ENCODE measurements at regions of chr15 and their contacts with region 1.

Region 1: GRCh38 chr15:96225320-96226259 is 104.9 kb upstream of the NR2F2 start:
- DNase-seq: peak; percentile 87 to 91
- H3K4me3 ChIP-seq: no peak overlapping the region
- H3K4me3 Mint-ChIP-seq: peak overlapping the region; percentile 12
- H3K27ac Mint-ChIP-seq: peak overlapping the region; percentile 74
- H3K4me1 ChIP-seq: peaks cover 50% of the 10 kb centered on the region
- H3K4me1 Mint-ChIP-seq: peaks cover 49% of the 10 kb centered on the region
- H3K27me3 ChIP-seq: no peaks in the 10 kb centered on the region
- H3K27me3 Mint-ChIP-seq: no peaks in the 10 kb centered on the region
- CTCF ChIP-seq: no peak

Region 2: DNA sequence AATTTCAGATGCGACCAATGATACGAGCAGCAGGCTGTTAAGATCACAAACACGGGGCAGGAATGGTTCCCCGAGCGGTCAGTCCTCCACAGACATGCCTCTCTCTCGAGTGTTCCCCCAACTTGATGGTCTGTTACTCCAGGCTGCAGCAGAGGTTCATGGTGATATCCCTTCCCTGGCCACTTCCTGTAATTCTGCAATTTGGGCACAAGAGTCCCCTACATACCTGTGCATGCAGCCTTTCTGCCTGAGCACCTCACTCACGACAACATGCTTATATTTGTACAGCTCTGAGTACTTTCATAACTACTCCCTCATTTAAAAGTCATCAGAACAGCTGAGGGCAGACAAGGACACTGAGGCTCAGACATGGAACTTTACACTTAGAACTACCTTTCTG is 303.2 kb before region 1 on chr15:
- CTCF ChIA-PET with region 1: no interaction called
- POLR2A ChIA-PET with region 1: no interaction called
- intact Hi-C with region 1: loop called (anchors 1 kb)
- DNase-seq: peak; percentile 52 to 57
- H3K4me3 ChIP-seq: no peak overlapping the region
- H3K4me3 Mint-ChIP-seq: no peak overlapping the region
- H3K27ac Mint-ChIP-seq: no peak overlapping the region
- H3K4me1 ChIP-seq: no peaks in the 10 kb centered on the region
- H3K4me1 Mint-ChIP-seq: peaks cover 7% of the 10 kb centered on the region
- H3K27me3 ChIP-seq: no peaks in the 10 kb centered on the region
- H3K27me3 Mint-ChIP-seq: no peaks in the 10 kb centered on the region
- CTCF ChIP-seq: peak in 1 of 2 experiments; percentile 33

Region 3: GRCh38 chr15:96031426-96032110 is 194.0 kb before region 1 on chr15:
- CTCF ChIA-PET with region 1: no interaction called
- POLR2A ChIA-PET with region 1: no interaction called
- intact Hi-C with region 1: no loop called
- DNase-seq: peak in 1 of 2 experiments; percentile 12
- H3K4me3 ChIP-seq: no peak overlapping the region
- H3K4me3 Mint-ChIP-seq: peak overlapping the region; percentile 13
- H3K27ac Mint-ChIP-seq: peak overlapping the region; percentile 43
- H3K4me1 ChIP-seq: peaks cover 24% of the 10 kb centered on the region
- H3K4me1 Mint-ChIP-seq: peaks cover 22% of the 10 kb centered on the region
- H3K27me3 ChIP-seq: no peaks in the 10 kb centered on the region
- H3K27me3 Mint-ChIP-seq: no peaks in the 10 kb centered on the region
- CTCF ChIP-seq: no peak

Region 4: DNA sequence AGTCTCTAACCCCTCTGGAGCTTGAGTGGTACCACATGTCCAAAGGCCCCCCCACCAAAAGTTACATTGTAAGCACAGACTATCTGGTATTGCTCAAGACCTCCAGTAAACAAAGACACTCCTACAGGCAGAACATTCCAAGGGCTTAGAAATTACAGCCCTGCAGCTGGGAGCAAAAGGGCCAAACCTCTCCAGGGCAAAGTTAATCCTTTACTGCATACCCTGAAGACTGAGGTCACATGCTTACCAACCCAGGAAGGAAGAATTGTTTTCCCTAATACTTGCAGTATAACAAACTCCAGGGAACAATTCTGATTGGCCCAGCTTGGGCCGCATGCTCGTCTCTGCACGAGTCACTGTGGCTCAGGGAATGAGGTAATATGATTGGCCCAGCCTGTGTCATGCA is 161.2 kb before region 1 on chr15:
- CTCF ChIA-PET with region 1: no interaction called
- POLR2A ChIA-PET with region 1: no interaction called
- intact Hi-C with region 1: loop called (anchors 1 kb)
- DNase-seq: peak; percentile 83 to 87
- H3K4me3 ChIP-seq: no peak overlapping the region
- H3K4me3 Mint-ChIP-seq: peak overlapping the region; percentile 69
- H3K27ac Mint-ChIP-seq: peak overlapping the region; percentile 40
- H3K4me1 ChIP-seq: peaks cover 38% of the 10 kb centered on the region
- H3K4me1 Mint-ChIP-seq: peaks cover 18% of the 10 kb centered on the region
- H3K27me3 ChIP-seq: no peaks in the 10 kb centered on the region
- H3K27me3 Mint-ChIP-seq: no peaks in the 10 kb centered on the region
- CTCF ChIP-seq: no peak

Region 5: DNA sequence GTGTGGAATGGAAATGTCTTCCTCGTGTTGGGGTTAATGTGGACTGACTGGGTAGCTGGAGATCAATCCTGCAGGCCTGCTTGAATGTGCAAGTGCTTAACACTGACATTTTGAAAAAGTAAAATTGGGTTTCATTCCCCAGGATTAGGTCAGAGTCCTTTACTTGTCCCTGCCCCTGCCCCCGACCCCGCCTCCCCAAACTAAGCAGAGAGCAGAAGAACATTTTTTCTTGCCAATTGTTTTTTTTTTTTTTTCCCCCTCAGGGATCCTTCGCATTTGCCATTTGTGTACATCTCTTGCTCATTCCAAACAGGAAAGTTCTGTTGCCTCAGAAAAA is 42.1 kb before region 1 on chr15:
- CTCF ChIA-PET with region 1: interaction called, 3 read pairs
- POLR2A ChIA-PET with region 1: interaction called, 10 read pairs
- intact Hi-C with region 1: loop called (anchors 1 kb)
- DNase-seq: peak; percentile 34 to 45
- H3K4me3 ChIP-seq: no peak overlapping the region
- H3K4me3 Mint-ChIP-seq: peak overlapping the region; percentile 52
- H3K27ac Mint-ChIP-seq: peak overlapping the region; percentile 60
- H3K4me1 ChIP-seq: peaks cover 52% of the 10 kb centered on the region
- H3K4me1 Mint-ChIP-seq: peaks cover 57% of the 10 kb centered on the region
- H3K27me3 ChIP-seq: no peaks in the 10 kb centered on the region
- H3K27me3 Mint-ChIP-seq: no peaks in the 10 kb centered on the region
- CTCF ChIP-seq: no peak

Region 6: DNA sequence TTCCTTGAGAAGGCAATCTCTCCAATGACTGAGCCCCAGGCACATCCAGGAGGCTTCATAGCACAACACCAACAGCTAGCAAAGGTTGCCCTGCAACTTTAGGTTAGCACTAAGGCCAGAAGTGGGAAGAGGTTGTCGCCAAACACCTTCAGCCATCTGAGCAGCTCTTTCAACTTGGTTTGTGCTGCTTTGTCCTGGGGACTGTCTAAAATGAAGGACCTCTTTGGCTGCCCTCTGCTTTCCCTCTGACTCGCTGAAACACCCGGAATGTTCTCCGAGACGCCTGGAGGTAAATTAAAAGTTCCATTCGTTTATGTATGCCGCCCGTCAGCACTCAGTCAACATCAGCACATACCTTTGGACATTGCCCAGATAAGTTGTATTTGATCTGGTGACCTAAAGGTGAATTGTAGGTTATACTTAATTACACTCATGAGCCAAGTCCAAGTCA is 16.3 kb before region 1 on chr15:
- CTCF ChIA-PET with region 1: no interaction called
- POLR2A ChIA-PET with region 1: interaction called, 5 read pairs
- intact Hi-C with region 1: loop called (anchors 1 kb)
- DNase-seq: peak; percentile 85 to 92
- H3K4me3 ChIP-seq: no peak overlapping the region
- H3K4me3 Mint-ChIP-seq: peak overlapping the region; percentile 52
- H3K27ac Mint-ChIP-seq: peak overlapping the region; percentile 93
- H3K4me1 ChIP-seq: peaks cover 35% of the 10 kb centered on the region
- H3K4me1 Mint-ChIP-seq: peaks cover 24% of the 10 kb centered on the region
- H3K27me3 ChIP-seq: no peaks in the 10 kb centered on the region
- H3K27me3 Mint-ChIP-seq: no peaks in the 10 kb centered on the region
- CTCF ChIP-seq: no peak

Region 7: GRCh38 chr15:96264801-96265515 is 39.4 kb after region 1 on chr15:
- CTCF ChIA-PET with region 1: interaction called, 7 read pairs
- POLR2A ChIA-PET with region 1: interaction called, 15 read pairs
- intact Hi-C with region 1: loop called (anchors 1 kb)
- DNase-seq: peak; percentile 84 to 91
- H3K4me3 ChIP-seq: no peak overlapping the region
- H3K4me3 Mint-ChIP-seq: peak overlapping the region; percentile 68
- H3K27ac Mint-ChIP-seq: peak overlapping the region; percentile 98
- H3K4me1 ChIP-seq: peaks cover 78% of the 10 kb centered on the region
- H3K4me1 Mint-ChIP-seq: peaks cover 50% of the 10 kb centered on the region
- H3K27me3 ChIP-seq: no peaks in the 10 kb centered on the region
- H3K27me3 Mint-ChIP-seq: no peaks in the 10 kb centered on the region
- CTCF ChIP-seq: no peak